ENCODE measurements at regions of chr16 and their contacts with region 1.

Region 1: GRCh38 chr16:84617791-84618580 is at the start of gene COTL1:
- DNase-seq: peak; percentile 98
- ATAC-seq: peak; percentile 77
- H3K4me3 Mint-ChIP-seq: peak within 1 kb of the TSS; percentile 98
- H3K27ac Mint-ChIP-seq: peak within 1 kb of the TSS; percentile 87
- H3K4me1 Mint-ChIP-seq: peaks cover 41% of the 10 kb centered on the region
- H3K27me3 Mint-ChIP-seq: no peaks in the 10 kb centered on the region
- total RNA-seq, gene COTL1: 353 to 384 TPM

Region 2: DNA sequence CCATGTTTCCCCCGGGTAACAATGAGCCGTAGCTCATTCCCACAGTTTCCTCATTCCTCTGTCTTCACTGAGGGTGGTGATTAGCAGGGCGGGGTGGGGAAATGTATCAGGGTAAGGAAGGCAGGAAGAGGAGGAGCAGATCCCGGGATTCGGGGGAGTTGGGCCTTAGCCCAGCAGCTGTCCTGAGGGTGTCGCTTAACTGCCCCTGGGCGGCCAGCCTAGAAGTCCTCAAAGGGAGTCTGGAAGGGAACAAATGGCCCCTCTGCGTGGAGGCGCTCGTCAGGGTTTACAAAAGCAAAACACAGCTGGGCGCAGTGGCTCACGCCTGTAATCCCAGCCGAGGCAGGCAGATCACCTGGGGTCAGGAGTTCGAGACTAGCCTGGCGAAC is 704.7 kb before region 1 on chr16:
- CTCF ChIA-PET with region 1: no interaction called
- POLR2A ChIA-PET with region 1: no interaction called
- intact Hi-C with region 1: no loop called
- DNase-seq: no peak
- ATAC-seq: no peak
- H3K4me3 Mint-ChIP-seq: no peak overlapping the region
- H3K27ac Mint-ChIP-seq: no peak overlapping the region
- H3K4me1 Mint-ChIP-seq: no peaks in the 10 kb centered on the region
- H3K27me3 Mint-ChIP-seq: no peaks in the 10 kb centered on the region

Region 3: GRCh38 chr16:84186685-84187437 is 431.1 kb before region 1 on chr16 and contains the start of gene TAF1C:
- CTCF ChIA-PET with region 1: no interaction called
- POLR2A ChIA-PET with region 1: no interaction called
- intact Hi-C with region 1: loop called in 1 of 2 experiments (anchors 1 kb)
- DNase-seq: peak; percentile 95
- ATAC-seq: peak; percentile 96
- H3K4me3 Mint-ChIP-seq: peak within 1 kb of the TSS; percentile 94
- H3K27ac Mint-ChIP-seq: peak within 1 kb of the TSS; percentile 94
- H3K4me1 Mint-ChIP-seq: peaks cover 16% of the 10 kb centered on the region
- H3K27me3 Mint-ChIP-seq: no peaks in the 10 kb centered on the region
- total RNA-seq, gene TAF1C: 44.4 to 45.7 TPM

Region 4: DNA sequence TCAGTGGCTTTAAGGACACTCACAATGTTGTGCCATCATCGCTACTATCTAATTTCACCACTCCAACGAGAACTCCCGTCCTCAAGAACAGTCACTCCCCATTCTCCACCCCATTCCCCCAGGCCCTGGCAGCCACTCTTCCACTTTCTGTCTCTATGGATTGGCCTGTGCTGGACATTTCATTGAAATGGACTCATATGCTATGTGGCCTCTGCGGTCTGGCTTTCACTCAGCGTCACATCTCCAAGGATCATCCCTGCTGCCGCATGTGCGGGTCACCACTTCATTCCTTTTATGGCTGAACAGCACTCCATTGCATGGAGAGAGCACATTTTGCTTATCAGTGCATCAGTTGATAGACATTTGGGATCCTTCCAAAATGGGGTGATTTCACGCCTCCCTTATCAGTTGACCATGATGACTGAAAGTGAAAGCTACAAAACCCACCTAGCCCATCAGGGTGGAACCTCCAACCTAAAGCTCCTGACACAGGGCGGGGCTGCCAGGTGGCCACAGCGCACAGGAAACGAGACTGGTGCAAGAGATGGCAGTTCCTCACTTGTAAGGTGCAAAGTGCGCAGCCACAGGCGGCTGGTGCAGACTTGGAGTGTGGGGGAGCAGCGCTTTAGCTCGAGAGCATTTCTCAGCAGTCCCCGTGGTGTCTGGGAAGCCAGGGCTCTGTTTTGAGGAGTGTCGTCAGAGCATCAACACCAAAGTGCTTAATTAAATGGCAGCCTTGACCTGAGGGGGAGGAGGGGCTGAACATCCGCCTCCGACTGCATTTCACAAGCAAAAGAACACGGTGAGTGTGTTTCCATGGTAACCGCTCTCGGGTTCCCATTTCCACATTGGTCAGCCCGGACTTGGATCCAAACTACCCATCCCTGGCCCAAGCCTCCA is 23.9 kb before region 1 on chr16:
- CTCF ChIA-PET with region 1: interaction called, 87 read pairs
- POLR2A ChIA-PET with region 1: interaction called, 20 read pairs
- intact Hi-C with region 1: loop called in 1 of 2 experiments (anchors 1 kb)
- DNase-seq: peak; percentile 85
- ATAC-seq: peak; percentile 80
- H3K4me3 Mint-ChIP-seq: peak overlapping the region; percentile 67
- H3K27ac Mint-ChIP-seq: peak overlapping the region; percentile 81
- H3K4me1 Mint-ChIP-seq: peaks cover 65% of the 10 kb centered on the region
- H3K27me3 Mint-ChIP-seq: no peaks in the 10 kb centered on the region

Region 5: GRCh38 chr16:84654238-84654637 is 36.3 kb after region 1 on chr16:
- CTCF ChIA-PET with region 1: interaction called, 10 read pairs
- POLR2A ChIA-PET with region 1: no interaction called
- intact Hi-C with region 1: loop called in 1 of 2 experiments (anchors 2 kb)
- DNase-seq: no peak
- ATAC-seq: no peak
- H3K4me3 Mint-ChIP-seq: no peak overlapping the region
- H3K27ac Mint-ChIP-seq: no peak overlapping the region
- H3K4me1 Mint-ChIP-seq: peaks cover 72% of the 10 kb centered on the region
- H3K27me3 Mint-ChIP-seq: no peaks in the 10 kb centered on the region

Region 6: DNA sequence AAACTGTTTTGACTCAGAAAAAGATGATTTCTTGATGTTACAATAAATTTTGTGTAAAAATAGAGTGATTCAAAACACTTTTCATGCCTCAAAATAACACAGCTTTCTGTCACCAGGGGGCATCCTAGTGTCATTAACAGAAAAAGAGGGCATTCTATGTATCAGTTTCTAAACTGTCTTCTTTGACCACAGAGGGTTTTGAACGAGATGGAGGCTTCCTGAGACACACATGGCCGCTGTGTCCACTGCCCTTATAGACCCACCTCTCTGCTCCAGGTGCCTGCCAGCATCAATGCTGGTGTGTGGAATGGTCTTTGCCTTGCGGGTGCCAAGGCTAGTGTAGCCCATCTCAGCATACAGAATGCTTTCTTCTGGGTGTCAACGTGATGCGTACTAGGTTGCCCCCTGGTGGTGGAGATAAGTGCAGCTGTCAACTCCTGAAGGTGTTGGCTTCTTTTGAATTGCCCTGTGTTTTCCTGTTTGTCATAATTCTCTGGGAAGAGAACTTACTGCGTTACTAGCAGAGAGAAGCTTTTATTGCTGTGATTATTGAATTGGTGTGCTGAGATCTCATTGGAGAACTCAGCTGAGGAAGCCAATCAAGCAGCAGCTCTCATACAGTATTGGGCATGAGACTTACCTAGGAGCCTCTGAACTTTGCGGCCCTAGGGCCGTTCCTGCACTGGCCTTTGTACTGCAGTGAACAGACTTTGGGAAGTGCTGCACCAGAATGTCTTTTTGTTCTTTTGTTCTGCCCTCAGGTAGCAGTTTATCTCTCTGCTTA is 120.5 kb after region 1 on chr16:
- CTCF ChIA-PET with region 1: interaction called, 29 read pairs
- POLR2A ChIA-PET with region 1: no interaction called
- intact Hi-C with region 1: loop called in 1 of 2 experiments (anchors 1 kb)
- DNase-seq: peak; percentile 85
- ATAC-seq: peak; percentile 79
- H3K4me3 Mint-ChIP-seq: no peak overlapping the region
- H3K27ac Mint-ChIP-seq: peak overlapping the region; percentile 42
- H3K4me1 Mint-ChIP-seq: peaks cover 59% of the 10 kb centered on the region
- H3K27me3 Mint-ChIP-seq: no peaks in the 10 kb centered on the region